Heart right ventricle (tissue), 16 donors: ENCODE measurements at regions of chr3 and their contacts with region 1.

Region 1: DNA sequence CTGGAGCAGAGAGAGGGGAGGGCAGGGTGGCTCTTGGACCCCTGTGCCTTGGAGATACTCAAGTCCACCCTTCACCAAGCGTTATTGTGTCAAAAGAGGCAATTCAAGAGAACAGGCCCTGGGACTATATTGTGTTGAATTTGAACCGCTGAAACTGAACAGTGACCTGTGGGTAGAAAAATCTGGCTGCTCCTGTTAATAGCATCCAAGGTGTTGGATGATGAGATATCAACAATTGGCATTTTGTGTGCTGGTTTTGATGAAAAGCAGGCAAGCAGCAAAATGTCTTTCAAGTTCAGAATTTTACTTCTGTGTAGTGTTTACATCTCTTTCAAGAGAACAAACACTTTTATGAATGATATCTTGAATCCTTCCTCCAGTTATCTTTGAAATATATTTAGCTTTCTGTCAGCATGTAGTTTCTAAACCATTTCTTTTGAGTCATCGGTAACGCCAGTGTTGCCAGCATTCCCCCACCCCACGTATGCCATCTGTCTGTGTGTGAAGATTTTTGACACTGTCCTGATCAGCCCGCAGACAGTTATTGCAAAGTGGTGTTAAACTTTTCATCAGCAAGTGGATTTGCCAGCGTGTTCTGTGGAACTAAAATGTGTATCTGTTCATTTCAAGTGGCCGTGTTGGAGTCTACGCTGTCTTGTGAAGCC is 34.8 kb downstream of the PDHB start:
- DNase-seq: peak in 1 of 2 donors; percentile 51
- ATAC-seq: peak; percentile 59 to 91 (median 82)
- H3K4me3 ChIP-seq: no peak overlapping the region
- H3K27ac ChIP-seq: peak overlapping the region in 9 of 10 donors; percentile 5 to 78 (median 58)
- H3K4me1 ChIP-seq: peaks cover 0 to 20% (median 13%) of the 10 kb centered on the region in 9 donors
- H3K27me3 ChIP-seq: no peaks in the 10 kb centered on the region
- CTCF ChIP-seq: no peak

Region 2: DNA sequence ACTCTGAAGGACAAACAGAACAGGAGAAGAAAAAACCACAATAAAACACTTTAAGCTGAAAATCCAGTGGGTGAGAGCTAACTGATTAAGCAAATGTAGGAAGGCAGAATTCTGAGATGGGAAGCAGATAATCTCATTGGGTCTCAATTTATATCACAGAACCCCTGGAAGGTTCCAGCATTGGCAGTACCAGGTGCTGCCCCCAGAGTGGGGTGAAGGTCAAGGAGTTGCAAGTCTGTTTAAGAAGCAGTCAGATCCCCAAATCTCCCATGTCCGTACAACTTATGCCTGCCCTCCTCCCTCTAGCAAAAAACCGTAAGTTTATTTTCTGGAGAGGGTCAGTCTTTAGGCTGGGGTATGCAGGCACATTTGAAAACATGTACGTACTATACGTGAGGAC is 21.1 kb before region 1 on chr3:
- intact Hi-C with region 1: loop called in 1 of 10 experiments (anchors 2 kb)
- DNase-seq: no peak
- ATAC-seq: no peak
- H3K4me3 ChIP-seq: no peak overlapping the region
- H3K27ac ChIP-seq: no peak overlapping the region
- H3K4me1 ChIP-seq: no peaks in the 10 kb centered on the region
- H3K27me3 ChIP-seq: no peaks in the 10 kb centered on the region
- CTCF ChIP-seq: no peak

Region 3: DNA sequence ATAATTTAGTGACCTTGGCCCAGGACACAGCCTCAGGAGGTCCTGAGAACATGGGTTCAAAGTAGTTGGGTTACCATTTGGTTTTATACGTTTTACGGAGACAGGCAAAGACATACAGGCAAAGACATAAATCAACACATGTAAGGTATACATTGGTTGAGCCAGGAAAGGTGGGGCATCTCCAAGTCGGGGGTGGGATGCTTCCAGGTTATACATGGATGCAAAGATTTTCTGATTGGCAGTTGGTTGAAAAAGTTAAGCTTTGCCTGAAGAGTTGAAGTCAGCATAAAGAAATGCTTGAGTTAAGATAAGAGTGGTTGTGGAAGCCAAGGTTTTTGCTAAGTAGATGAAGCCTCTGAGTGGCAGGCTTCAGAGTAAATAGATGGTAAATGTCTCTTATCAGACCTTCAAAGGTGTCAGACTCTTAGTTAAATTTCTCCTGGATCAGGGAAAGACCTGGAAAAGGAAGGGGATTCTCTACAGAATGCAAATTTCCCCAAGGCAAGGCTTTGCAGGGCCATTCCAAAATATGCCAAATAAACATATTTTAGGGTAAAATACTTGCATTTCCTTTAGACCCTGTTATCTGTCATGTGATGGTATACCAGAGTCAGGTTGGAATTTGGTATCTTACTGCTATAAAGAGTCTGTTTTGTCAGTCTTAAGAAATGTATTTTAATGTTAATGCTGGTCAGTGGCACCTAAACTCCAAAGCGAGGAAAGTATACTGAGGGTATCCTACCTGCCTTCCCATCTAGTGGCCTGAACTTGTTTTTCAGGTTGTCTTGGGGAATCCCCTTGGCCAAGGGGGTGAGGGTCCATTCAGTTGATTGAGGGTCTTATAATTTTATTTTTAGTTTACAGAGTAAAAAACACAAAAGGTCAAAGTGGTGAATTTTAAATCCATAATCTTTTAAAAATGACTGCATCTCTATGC is 43.0 kb after region 1 on chr3:
- intact Hi-C with region 1: no loop called
- DNase-seq: no peak
- ATAC-seq: no peak
- H3K4me3 ChIP-seq: no peak overlapping the region
- H3K27ac ChIP-seq: no peak overlapping the region
- H3K4me1 ChIP-seq: no peaks in the 10 kb centered on the region
- H3K27me3 ChIP-seq: no peaks in the 10 kb centered on the region
- CTCF ChIP-seq: no peak